ENCODE measurements at regions of chr2 and their contacts with region 1.

Region 1: DNA sequence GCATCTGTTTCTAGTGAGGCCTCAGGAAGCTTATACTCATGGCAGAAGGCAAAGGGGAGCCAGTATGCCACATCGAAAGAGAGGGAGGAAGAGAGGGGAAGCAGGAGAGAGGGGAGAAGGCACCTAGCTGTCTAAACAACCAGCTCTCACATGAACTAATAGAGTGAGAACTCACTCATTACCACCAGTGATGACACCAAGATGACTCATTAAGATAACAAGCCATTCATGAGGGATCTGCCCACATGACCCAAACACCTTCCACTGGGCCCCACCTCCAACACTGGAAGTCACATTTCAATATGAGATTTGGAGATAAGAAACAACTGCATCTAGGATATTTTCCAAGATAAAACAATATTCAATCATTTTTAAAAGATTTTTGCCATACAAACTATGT is 753.9 kb upstream of the ZEB2 start:
- DNase-seq: no peak
- H3K4me3 ChIP-seq: no peak overlapping the region
- H3K27ac ChIP-seq: no peak overlapping the region
- H3K4me1 ChIP-seq: no peaks in the 10 kb centered on the region
- H3K27me3 ChIP-seq: no peaks in the 10 kb centered on the region
- CTCF ChIP-seq: no peak

Region 2: DNA sequence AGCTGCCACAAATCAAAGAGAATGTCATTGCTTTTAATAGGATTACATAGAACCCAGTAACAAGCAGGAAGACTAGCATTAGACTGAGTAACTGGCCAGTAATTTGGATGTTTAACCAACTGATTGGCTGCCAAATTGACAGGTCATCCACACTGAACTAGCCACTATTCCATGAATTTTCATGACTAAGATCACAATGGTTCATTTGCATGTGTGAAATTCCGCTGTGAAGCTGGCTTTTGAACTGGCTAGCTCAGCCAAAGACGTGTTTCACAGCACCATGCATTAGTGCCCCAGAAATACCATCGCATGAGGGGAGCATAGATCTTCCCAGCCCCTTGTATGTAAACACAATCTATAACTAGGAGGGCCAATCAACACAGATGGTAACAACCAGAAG is 1494.8 kb before region 1 on chr2:
- CTCF ChIA-PET with region 1: no interaction called
- POLR2A ChIA-PET with region 1: interaction called, 23 read pairs
- intact Hi-C with region 1: no loop called
- DNase-seq: no peak
- H3K4me3 ChIP-seq: no peak overlapping the region
- H3K27ac ChIP-seq: no peak overlapping the region
- H3K4me1 ChIP-seq: no peaks in the 10 kb centered on the region
- H3K27me3 ChIP-seq: no peaks in the 10 kb centered on the region
- CTCF ChIP-seq: no peak

Region 3: DNA sequence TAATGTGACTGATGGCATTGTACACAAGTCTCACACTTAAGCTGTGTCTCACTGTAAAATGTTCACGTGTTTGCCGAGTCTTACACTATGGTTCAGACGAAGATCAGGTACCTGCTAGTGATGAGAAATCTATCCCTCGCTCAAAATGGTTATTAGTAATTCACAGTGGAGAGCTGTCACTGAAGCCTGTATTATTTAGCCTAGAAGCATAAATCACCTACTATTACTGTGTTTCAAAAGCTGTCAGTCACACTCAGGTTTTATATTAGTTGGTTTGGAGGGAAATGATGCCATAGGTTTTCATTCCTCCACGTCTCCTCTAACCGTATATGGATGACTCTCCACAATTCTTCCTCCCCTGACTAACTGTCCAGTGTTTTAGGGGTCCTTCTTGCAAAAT is 461.6 kb before region 1 on chr2:
- CTCF ChIA-PET with region 1: no interaction called
- POLR2A ChIA-PET with region 1: no interaction called
- intact Hi-C with region 1: no loop called
- DNase-seq: no peak
- H3K4me3 ChIP-seq: no peak overlapping the region
- H3K27ac ChIP-seq: no peak overlapping the region
- H3K4me1 ChIP-seq: no peaks in the 10 kb centered on the region
- H3K27me3 ChIP-seq: no peaks in the 10 kb centered on the region
- CTCF ChIP-seq: no peak

Measured in PC-9 (cell line).